IMR-90 (cell line): ENCODE measurements at regions of chr6 and their contacts with region 1.

Region 1: GRCh38 chr6:1686117-1687098 is 76.7 kb downstream of the FOXC1 start:
- DNase-seq: peak; percentile 96
- ATAC-seq: peak; percentile 89
- H3K4me3 ChIP-seq: no peak overlapping the region
- H3K27ac ChIP-seq: peak overlapping the region; percentile 83
- H3K4me1 ChIP-seq: peaks cover 14% of the 10 kb centered on the region
- H3K27me3 ChIP-seq: no peaks in the 10 kb centered on the region
- CTCF ChIP-seq: peak; percentile 50
- POLR2A ChIP-seq: no peak; the same call in 1 of the 2 replicates
- RAD21 ChIP-seq: peak; percentile 19; the same call in 1 of the 2 replicates

Region 2: GRCh38 chr6:1672386-1672785 is 14.0 kb before region 1 on chr6:
- CTCF ChIA-PET with region 1: interaction called, 3 read pairs
- POLR2A ChIA-PET with region 1: no interaction called
- dilution Hi-C with region 1: no loop called
- in situ Hi-C with region 1: no loop called
- intact Hi-C with region 1: loop called (anchors 2 kb)
- DNase-seq: peak; percentile 31
- ATAC-seq: peak; percentile 46
- H3K4me3 ChIP-seq: no peak overlapping the region
- H3K27ac ChIP-seq: no peak overlapping the region
- H3K4me1 ChIP-seq: peaks cover 19% of the 10 kb centered on the region
- H3K27me3 ChIP-seq: no peaks in the 10 kb centered on the region
- CTCF ChIP-seq: no peak
- POLR2A ChIP-seq: no peak
- RAD21 ChIP-seq: no peak

Region 3: DNA sequence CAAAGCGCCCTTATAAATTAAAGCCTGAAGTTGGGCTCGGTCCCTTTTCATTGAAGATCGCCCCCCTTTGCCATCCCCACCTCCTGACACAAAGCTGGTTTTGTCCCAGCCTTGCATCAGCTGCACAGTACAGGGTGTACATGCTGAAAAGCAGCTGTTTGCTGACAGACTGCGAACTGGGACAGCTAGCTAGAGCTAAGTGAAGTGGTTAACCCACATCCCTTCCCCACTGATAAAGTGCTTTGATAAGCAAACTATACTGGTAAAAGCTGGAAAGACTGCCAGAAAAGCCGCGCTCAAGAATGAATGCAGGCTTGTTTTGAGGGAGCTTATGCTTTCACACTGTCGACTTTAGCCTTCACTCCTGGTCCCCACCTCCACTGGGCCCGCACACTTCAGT is 351.7 kb after region 1 on chr6:
- CTCF ChIA-PET with region 1: no interaction called
- POLR2A ChIA-PET with region 1: no interaction called
- dilution Hi-C with region 1: no loop called
- in situ Hi-C with region 1: no loop called
- intact Hi-C with region 1: no loop called
- DNase-seq: peak; percentile 37
- ATAC-seq: peak; percentile 21; the same call in 1 of the 2 replicates
- H3K4me3 ChIP-seq: no peak overlapping the region
- H3K27ac ChIP-seq: no peak overlapping the region
- H3K4me1 ChIP-seq: peaks cover 7% of the 10 kb centered on the region; the same call in 1 of the 2 replicates
- H3K27me3 ChIP-seq: no peaks in the 10 kb centered on the region
- CTCF ChIP-seq: no peak
- POLR2A ChIP-seq: no peak
- RAD21 ChIP-seq: no peak